Posterior vena cava (tissue), 2 donors: ENCODE measurements at regions of chr10 and their contacts with region 1.

Region 1: DNA sequence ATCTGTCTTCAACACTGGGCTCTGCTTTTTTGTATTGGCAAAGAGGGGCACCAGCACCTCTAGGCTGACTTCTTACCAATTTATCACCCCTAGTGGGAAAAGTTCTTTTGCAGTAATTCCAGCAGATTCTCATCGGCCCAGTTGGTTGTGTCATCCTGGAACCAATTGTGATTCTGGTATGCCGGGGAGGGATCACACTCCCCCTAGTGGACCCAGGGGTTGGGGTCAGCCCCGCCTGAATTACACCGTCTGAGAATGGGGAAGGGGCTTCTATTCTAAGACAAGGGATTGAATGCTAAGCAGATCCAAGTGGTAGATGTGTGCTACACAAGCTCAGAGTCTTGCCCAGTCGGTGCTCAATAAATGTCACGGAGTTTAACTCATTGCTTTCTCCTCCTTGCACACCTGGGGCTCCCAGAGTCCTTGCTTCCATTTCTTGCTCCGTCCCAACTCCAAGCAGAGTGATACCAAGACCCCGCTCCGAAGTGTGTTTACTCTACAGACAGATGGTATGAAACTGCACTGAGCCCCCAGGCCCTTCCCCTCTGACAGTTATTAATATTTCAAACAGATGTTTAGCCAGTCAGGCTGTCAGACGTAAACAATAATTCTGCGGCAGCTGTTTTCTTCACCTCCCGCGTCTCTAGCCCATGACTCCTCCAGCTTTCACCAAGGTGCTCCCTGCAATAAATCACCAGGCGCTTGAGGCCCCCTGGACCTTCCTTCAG is 71.9 kb downstream of the C10orf105 start:
- DNase-seq: no peak

Region 2: GRCh38 chr10:71184421-71184820 is 463.3 kb before region 1 on chr10:
- intact Hi-C with region 1: loop called in 1 of 2 experiments (anchors 5 kb)
- DNase-seq: no peak

Region 3: GRCh38 chr10:73379064-73379748 is 1731.5 kb after region 1 on chr10:
- intact Hi-C with region 1: loop called in 1 of 2 experiments (anchors 10 kb)
- DNase-seq: no peak